WTC11 (cell line): ENCODE measurements at regions of chr2 and their contacts with region 1.

Region 1: GRCh38 chr2:30711646-30712085 is 95.6 kb downstream of the CAPN13 start:
- DNase-seq: peak; percentile 94
- ATAC-seq: peak; percentile 84
- H3K4me3 Mint-ChIP-seq: no peak overlapping the region
- H3K27ac Mint-ChIP-seq: no peak overlapping the region
- H3K4me1 Mint-ChIP-seq: no peaks in the 10 kb centered on the region
- H3K27me3 Mint-ChIP-seq: no peaks in the 10 kb centered on the region; the same call in 1 of the 2 replicates
- CTCF ChIP-seq: peak; percentile 98

Region 2: DNA sequence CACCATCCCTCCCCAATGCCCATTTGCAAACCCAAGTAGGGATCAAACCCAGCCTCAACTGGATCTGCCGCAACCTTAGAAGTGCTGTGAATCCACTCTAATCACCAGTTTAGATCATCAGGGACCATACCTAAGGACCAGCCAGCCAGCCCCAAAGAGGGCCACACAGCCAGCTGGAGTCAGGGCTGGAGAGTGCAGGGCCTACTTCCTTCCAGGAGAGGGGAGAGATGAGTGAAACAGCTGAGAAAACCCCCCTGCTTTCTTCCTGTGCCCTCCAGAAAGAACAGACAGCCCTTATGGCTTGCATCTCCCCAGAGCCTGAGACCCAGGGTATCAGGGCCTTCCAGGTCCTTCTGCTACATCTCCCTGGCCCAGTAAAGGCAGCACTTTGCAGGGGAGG is 539.0 kb before region 1 on chr2:
- CTCF ChIA-PET with region 1: interaction called, 237 read pairs
- POLR2A ChIA-PET with region 1: no interaction called
- DNase-seq: no peak
- ATAC-seq: no peak
- H3K4me3 Mint-ChIP-seq: no peak overlapping the region
- H3K27ac Mint-ChIP-seq: no peak overlapping the region
- H3K4me1 Mint-ChIP-seq: no peaks in the 10 kb centered on the region
- H3K27me3 Mint-ChIP-seq: no peaks in the 10 kb centered on the region
- CTCF ChIP-seq: no peak

Region 3: GRCh38 chr2:30421604-30422443 is 289.8 kb before region 1 on chr2:
- CTCF ChIA-PET with region 1: interaction called, 11 read pairs
- POLR2A ChIA-PET with region 1: no interaction called
- DNase-seq: no peak
- ATAC-seq: peak; percentile 91
- H3K4me3 Mint-ChIP-seq: no peak overlapping the region
- H3K27ac Mint-ChIP-seq: no peak overlapping the region
- H3K4me1 Mint-ChIP-seq: peaks cover 26% of the 10 kb centered on the region
- H3K27me3 Mint-ChIP-seq: no peaks in the 10 kb centered on the region
- CTCF ChIP-seq: no peak

Region 4: GRCh38 chr2:30721668-30722647 is 10.3 kb after region 1 on chr2:
- CTCF ChIA-PET with region 1: interaction called, 28 read pairs
- POLR2A ChIA-PET with region 1: no interaction called
- DNase-seq: no peak
- ATAC-seq: no peak
- H3K4me3 Mint-ChIP-seq: no peak overlapping the region
- H3K27ac Mint-ChIP-seq: no peak overlapping the region
- H3K4me1 Mint-ChIP-seq: no peaks in the 10 kb centered on the region
- H3K27me3 Mint-ChIP-seq: no peaks in the 10 kb centered on the region; the same call in 1 of the 2 replicates
- CTCF ChIP-seq: no peak

Region 5: DNA sequence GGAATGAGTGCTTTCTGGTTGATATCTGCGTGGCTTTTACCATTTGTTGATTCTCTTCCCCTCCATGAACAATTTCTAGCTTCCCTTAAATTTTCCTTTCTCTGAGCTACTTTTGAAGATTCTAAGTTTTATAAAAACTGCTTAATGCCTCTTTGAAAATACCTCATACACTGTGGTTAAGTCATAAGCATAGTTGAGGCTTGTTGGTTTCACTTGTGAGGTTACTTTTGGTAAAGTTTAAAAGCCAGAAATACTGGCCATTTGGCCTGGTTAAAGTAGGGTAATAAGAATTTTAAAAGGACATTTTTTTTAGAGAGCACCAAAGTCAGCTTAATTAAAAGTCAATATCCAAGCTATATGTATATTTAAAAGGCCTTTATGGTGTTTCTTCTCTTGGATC is 116.9 kb after region 1 on chr2:
- CTCF ChIA-PET with region 1: no interaction called
- POLR2A ChIA-PET with region 1: no interaction called
- DNase-seq: no peak
- ATAC-seq: no peak
- H3K4me3 Mint-ChIP-seq: no peak overlapping the region
- H3K27ac Mint-ChIP-seq: no peak overlapping the region
- H3K4me1 Mint-ChIP-seq: no peaks in the 10 kb centered on the region
- H3K27me3 Mint-ChIP-seq: no peaks in the 10 kb centered on the region
- CTCF ChIP-seq: no peak

Region 6: DNA sequence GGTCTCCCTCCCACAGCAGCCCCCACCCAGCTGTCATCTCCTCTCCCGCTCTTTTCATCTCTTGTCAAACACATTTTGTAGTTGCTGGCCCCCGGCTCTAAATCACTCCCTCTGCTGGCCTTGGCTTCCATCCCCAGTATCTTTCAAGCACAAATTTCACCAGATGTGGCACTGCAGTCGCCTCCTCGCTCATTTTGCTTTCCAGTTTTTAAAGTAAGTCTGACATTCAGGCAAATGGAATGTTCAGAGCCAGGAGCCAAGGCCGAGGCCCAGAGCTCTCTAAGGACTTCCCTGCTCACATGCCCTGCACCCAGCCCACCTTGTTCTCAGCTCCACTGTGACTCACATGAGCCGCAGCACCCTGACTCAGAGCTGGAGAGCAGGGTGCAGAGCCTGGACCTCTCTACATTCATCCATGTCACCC is 268.2 kb after region 1 on chr2:
- CTCF ChIA-PET with region 1: interaction called, 15 read pairs
- POLR2A ChIA-PET with region 1: no interaction called
- DNase-seq: no peak
- ATAC-seq: peak; percentile 20; the same call in 1 of the 2 replicates
- H3K4me3 Mint-ChIP-seq: no peak overlapping the region
- H3K27ac Mint-ChIP-seq: no peak overlapping the region
- H3K4me1 Mint-ChIP-seq: peaks cover 27% of the 10 kb centered on the region
- H3K27me3 Mint-ChIP-seq: no peaks in the 10 kb centered on the region
- CTCF ChIP-seq: no peak

Region 7: DNA sequence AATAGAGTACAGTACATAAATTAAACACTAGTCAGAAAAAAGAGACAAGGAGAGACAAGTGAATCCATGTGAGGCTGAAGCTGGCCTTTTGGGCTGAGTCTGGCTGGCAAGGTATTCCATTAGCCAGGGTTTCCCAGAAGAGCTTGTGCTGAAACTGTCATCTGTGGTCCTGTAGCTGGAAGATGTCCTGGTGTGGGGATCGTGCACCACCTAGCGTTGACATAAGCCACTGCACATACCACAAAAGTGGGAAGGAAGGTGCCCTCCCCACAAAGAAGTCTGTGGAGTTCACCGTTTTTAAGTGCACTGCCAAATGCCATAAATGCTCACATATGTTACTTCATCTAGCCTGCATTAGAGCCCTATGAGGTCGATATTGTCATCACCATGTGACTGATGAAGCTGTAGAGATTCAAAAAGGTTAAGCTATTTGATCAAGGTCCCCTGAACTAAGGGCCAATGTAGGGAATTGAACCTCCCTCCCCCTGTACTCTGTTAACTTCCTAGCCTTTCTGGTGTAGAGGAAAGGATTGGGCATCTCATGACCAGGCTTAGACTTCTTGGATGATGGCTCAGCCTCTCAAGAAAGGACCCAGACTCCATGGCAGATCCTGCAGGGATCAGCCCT is 458.5 kb after region 1 on chr2:
- CTCF ChIA-PET with region 1: interaction called, 43 read pairs
- POLR2A ChIA-PET with region 1: no interaction called
- DNase-seq: peak; percentile 64
- ATAC-seq: peak; percentile 98
- H3K4me3 Mint-ChIP-seq: no peak overlapping the region
- H3K27ac Mint-ChIP-seq: no peak overlapping the region
- H3K4me1 Mint-ChIP-seq: no peaks in the 10 kb centered on the region
- H3K27me3 Mint-ChIP-seq: peaks cover 2% of the 10 kb centered on the region; the same call in 1 of the 2 replicates
- CTCF ChIP-seq: peak; percentile 83